H1 (cell line): ENCODE measurements at regions of chr1 and their contacts with region 1.

Region 1: GRCh38 chr1:201154389-201155165 is at the start of gene TMEM9:
- DNase-seq: peak; percentile 92 to 99
- H3K4me3 ChIP-seq: peak within 1 kb of the TSS; percentile 80 to 94 (median 82)
- H3K27ac ChIP-seq: peak within 1 kb of the TSS; percentile 74; the same call in 1 of the 2 replicates
- H3K4me1 ChIP-seq: peaks cover 0 to 13% (median 7%) of the 10 kb centered on the region in 4 experiments; a peak in 6 of 7 replicates
- H3K27me3 ChIP-seq: no peaks in the 10 kb centered on the region; a peak in 1 of 7 replicates
- CTCF ChIP-seq: no peak
- EP300 ChIP-seq: no peak
- POLR2A ChIP-seq: peak; percentile 20 to 67; a peak in 1 of 3 replicates
- RAD21 ChIP-seq: no peak
- total RNA-seq, gene TMEM9: 79.9 and 83.2 TPM in 2 replicates

Region 2: DNA sequence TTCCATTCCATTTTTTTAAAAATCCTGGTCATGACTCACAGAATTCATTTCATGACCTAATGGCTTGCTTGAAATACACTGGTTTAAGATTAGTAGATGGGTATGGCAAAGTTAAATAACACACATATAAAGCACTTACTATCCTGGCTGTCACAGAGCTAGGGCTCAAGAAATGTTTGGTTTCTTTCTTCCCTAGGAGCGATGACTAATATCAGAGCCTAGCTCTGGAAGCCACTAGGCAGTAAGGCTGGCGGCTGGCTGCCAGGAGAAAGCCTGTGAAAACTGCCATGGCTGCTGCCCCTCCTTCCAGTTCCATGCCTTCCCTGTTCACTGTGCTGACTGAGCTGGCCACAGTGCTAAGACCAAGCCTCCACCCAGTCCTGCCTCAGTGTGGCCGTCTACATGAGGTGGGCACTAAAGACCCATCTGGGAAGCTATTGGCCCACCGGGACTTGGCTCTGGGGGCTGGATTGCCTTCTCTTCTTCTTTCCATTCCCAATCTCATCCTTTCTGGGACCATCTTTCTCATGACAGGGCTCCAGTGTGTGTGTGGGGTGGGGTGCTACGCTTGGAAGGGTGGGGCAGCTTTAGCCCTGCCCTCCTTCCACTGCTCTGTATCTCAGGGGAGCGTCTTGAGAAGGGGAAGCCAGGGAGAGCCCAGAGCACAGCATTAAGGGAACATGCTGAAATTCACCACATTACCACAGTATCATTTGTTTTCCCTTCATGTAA is 16.8 kb before region 1 on chr1:
- CTCF ChIA-PET with region 1: interaction called, 32 read pairs
- POLR2A ChIA-PET with region 1: interaction called, 28 read pairs
- DNase-seq: no peak
- H3K4me3 ChIP-seq: no peak overlapping the region
- H3K27ac ChIP-seq: no peak overlapping the region
- H3K4me1 ChIP-seq: no peaks in the 10 kb centered on the region
- H3K27me3 ChIP-seq: no peaks in the 10 kb centered on the region
- CTCF ChIP-seq: no peak
- EP300 ChIP-seq: no peak
- POLR2A ChIP-seq: no peak
- RAD21 ChIP-seq: no peak

Region 3: GRCh38 chr1:201170533-201171062 is 16.0 kb after region 1 on chr1:
- CTCF ChIA-PET with region 1: interaction called, 13 read pairs
- POLR2A ChIA-PET with region 1: interaction called, 105 read pairs
- DNase-seq: peak; percentile 60 to 86
- H3K4me3 ChIP-seq: peak overlapping the region; percentile 60 to 76 (median 72)
- H3K27ac ChIP-seq: no peak overlapping the region
- H3K4me1 ChIP-seq: peaks cover 5 to 10% (median 8%) of the 10 kb centered on the region in 4 experiments; a peak in 6 of 7 replicates
- H3K27me3 ChIP-seq: peaks cover 0 to 6% (median 4%) of the 10 kb centered on the region in 4 experiments; a peak in 3 of 7 replicates
- CTCF ChIP-seq: no peak
- EP300 ChIP-seq: no peak
- POLR2A ChIP-seq: no peak
- RAD21 ChIP-seq: no peak

Region 4: GRCh38 chr1:201676197-201676596 is 521.6 kb after region 1 on chr1:
- CTCF ChIA-PET with region 1: no interaction called
- POLR2A ChIA-PET with region 1: no interaction called
- DNase-seq: no peak
- H3K4me3 ChIP-seq: no peak overlapping the region
- H3K27ac ChIP-seq: peak overlapping the region; percentile 64; the same call in 1 of the 2 replicates
- H3K4me1 ChIP-seq: peaks cover 7 to 35% (median 24%) of the 10 kb centered on the region in 4 experiments
- H3K27me3 ChIP-seq: no peaks in the 10 kb centered on the region
- CTCF ChIP-seq: no peak
- EP300 ChIP-seq: no peak
- POLR2A ChIP-seq: no peak
- RAD21 ChIP-seq: no peak